Activated CD4-positive, alpha-beta memory T cell treated with anti-CD3 and anti-CD28 coated beads, Interleukin-2, amount 10 ng/mL, durations not matched to agents 7 days and 5 days (primary cell): ENCODE measurements at regions of chr17 and their contacts with region 1.

Region 1: GRCh38 chr17:75632863-75633485 is at the start of gene SMIM5:
- DNase-seq: peak; percentile 84
- H3K4me3 Mint-ChIP-seq: no peak within 1 kb of the TSS
- H3K27ac Mint-ChIP-seq: no peak within 1 kb of the TSS
- H3K4me1 Mint-ChIP-seq: no peaks in the 10 kb centered on the region
- H3K27me3 Mint-ChIP-seq: no peaks in the 10 kb centered on the region
- total RNA-seq, gene SMIM5: not detected

Region 2: GRCh38 chr17:75430159-75430974 is 202.6 kb before region 1 on chr17:
- CTCF ChIA-PET with region 1: interaction called, 13 read pairs
- POLR2A ChIA-PET with region 1: no interaction called
- DNase-seq: no peak
- H3K4me3 Mint-ChIP-seq: no peak overlapping the region
- H3K27ac Mint-ChIP-seq: no peak overlapping the region
- H3K4me1 Mint-ChIP-seq: peaks cover 24% of the 10 kb centered on the region
- H3K27me3 Mint-ChIP-seq: peaks cover 14% of the 10 kb centered on the region

Region 3: GRCh38 chr17:75610103-75610984 is 22.6 kb before region 1 on chr17:
- CTCF ChIA-PET with region 1: interaction called, 10 read pairs
- POLR2A ChIA-PET with region 1: no interaction called
- DNase-seq: no peak
- H3K4me3 Mint-ChIP-seq: no peak overlapping the region
- H3K27ac Mint-ChIP-seq: no peak overlapping the region
- H3K4me1 Mint-ChIP-seq: peaks cover 7% of the 10 kb centered on the region
- H3K27me3 Mint-ChIP-seq: no peaks in the 10 kb centered on the region

Region 4: GRCh38 chr17:75645889-75646637 is 13.1 kb after region 1 on chr17:
- CTCF ChIA-PET with region 1: interaction called, 75 read pairs
- POLR2A ChIA-PET with region 1: interaction called, 3 read pairs
- DNase-seq: peak; percentile 34
- H3K4me3 Mint-ChIP-seq: no peak overlapping the region
- H3K27ac Mint-ChIP-seq: peak overlapping the region; percentile 28
- H3K4me1 Mint-ChIP-seq: peaks cover 17% of the 10 kb centered on the region
- H3K27me3 Mint-ChIP-seq: no peaks in the 10 kb centered on the region

Region 5: DNA sequence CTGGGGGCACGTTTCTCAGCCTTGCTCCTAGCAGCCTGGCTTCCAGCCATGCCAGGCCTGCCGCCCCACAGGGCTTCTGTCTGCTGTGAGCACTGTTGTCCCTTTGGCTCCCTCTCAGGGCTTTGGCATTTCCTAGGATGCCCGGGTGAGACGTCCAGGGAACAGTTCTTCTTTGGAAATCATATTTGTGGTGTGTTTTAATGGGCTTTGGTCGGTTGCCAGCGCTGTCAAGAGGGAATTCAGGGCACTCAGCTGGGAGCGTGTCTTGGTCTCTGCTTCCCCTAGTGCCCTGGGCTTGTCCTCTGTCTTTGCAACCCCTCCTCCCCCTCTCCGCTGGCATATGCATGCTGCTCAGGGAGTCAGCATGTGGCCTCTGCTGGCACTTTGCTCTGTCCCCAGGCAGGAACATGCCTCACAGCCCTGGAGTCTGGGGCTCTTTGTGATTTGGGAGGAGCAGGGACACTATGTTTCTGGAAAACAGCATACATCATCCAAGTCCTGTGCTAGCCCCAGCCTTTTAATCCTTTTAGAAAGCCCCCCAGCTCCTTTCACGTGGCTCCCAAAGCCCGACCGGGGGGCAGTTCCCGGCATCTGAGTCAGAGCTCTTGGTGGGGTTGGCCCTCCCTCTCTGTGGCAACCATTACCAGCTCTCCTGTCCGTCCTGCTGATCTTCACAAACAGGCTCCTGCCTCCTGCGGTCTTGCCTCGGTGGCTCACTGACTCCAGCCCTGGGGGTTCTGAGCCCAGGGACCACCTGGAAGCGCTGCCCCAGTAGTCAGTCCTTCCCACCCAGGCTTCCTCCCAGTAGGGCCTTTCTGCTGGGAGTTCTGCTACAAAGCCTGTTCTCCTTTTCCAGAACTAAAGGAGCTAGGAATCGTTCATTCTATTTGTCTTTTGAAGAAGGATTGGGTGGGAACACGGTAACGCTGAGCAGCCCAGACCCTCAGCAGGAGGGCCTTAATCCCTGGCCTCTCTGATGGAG is 60.8 kb after region 1 on chr17:
- CTCF ChIA-PET with region 1: interaction called, 15 read pairs
- POLR2A ChIA-PET with region 1: no interaction called
- DNase-seq: no peak
- H3K4me3 Mint-ChIP-seq: no peak overlapping the region
- H3K27ac Mint-ChIP-seq: no peak overlapping the region
- H3K4me1 Mint-ChIP-seq: peaks cover 31% of the 10 kb centered on the region
- H3K27me3 Mint-ChIP-seq: no peaks in the 10 kb centered on the region